MCF 10A (cell line): ENCODE measurements at regions of chr5 and their contacts with region 1.

Region 1: DNA sequence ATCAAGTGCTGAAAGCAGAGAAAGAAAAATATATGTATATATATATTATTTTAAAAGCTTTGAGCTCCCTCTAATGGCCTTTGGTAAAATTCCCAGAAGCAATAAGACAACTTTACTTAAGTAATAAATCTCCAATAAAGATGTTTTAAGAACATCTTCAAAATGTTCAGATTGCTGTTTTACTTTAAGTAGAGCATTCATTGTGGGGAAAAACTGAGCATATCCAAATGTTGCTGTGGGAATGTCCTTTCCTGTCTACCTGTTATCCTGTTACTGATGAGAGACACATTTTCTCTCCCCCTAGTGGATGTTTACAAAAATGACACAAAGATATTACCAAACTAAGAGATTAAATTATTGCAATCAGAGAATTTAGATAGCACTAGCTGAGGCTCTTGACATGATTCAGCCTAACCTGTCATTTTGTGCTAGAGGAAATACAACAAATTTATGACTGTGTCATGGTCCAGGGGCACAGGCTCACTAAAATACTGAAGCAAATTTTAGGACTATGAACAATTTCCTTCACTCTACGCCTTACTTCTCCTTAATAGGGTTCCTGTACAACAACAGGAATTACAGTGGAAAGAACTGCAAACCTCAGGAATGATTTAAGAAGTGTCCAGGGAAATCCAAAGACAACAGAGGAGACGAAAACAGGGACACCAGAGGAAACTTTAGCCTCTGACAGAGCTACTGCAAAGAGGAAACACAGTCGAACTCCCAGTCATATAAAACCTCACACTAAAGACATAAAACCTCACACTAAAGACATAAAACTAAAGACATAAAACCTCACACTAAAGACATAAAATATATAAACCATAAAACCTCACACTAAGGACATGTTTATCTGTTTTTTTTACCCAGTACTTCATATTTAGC is 24.3 kb upstream of the PRRC1 start:
- DNase-seq: peak; percentile 75
- H3K4me3 Mint-ChIP-seq: no peak overlapping the region
- H3K27ac Mint-ChIP-seq: no peak overlapping the region
- H3K4me1 Mint-ChIP-seq: no peaks in the 10 kb centered on the region
- H3K27me3 Mint-ChIP-seq: peaks cover 82% of the 10 kb centered on the region
- CTCF ChIP-seq: peak; percentile 95

Region 2: DNA sequence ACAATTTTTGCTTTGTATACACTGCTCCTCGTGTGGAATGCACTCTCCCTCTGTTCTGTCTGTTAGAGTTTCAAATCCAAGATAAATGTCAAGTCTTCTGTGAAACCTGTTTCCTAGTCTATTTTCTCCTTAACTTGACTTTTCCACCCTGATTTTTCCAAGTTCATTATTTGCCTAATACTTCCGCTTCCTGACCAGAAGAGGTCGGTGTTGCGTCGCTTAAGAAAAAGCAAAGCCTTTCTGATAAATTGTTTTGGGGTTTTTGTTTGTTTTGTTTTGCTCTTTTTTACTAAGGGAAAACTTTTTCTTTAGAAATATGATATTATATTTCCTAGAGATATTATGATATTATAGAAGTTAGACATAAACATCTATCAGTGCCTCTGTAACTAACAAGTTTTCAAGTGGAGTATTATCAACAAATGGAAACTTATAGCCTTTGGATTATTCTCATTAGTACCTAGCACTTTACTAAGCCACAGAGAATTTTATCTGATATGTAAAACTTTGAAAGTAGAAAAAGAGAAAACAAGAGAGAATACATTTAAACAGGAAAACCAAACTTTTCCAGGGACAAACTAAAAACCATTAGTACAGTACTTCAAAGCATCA is 836.6 kb before region 1 on chr5:
- CTCF ChIA-PET with region 1: interaction called, 11 read pairs
- POLR2A ChIA-PET with region 1: interaction called, 3 read pairs
- intact Hi-C with region 1: loop called (anchors 1 kb)
- DNase-seq: peak; percentile 67
- H3K4me3 Mint-ChIP-seq: no peak overlapping the region
- H3K27ac Mint-ChIP-seq: no peak overlapping the region
- H3K4me1 Mint-ChIP-seq: no peaks in the 10 kb centered on the region
- H3K27me3 Mint-ChIP-seq: no peaks in the 10 kb centered on the region
- CTCF ChIP-seq: peak; percentile 98

Region 3: GRCh38 chr5:126837906-126838539 is 655.1 kb before region 1 on chr5:
- CTCF ChIA-PET with region 1: interaction called, 50 read pairs
- POLR2A ChIA-PET with region 1: no interaction called
- intact Hi-C with region 1: loop called (anchors 2 kb)
- DNase-seq: peak; percentile 13
- H3K4me3 Mint-ChIP-seq: no peak overlapping the region
- H3K27ac Mint-ChIP-seq: peak overlapping the region; percentile 8
- H3K4me1 Mint-ChIP-seq: no peaks in the 10 kb centered on the region
- H3K27me3 Mint-ChIP-seq: no peaks in the 10 kb centered on the region
- CTCF ChIP-seq: peak; percentile 48

Region 4: DNA sequence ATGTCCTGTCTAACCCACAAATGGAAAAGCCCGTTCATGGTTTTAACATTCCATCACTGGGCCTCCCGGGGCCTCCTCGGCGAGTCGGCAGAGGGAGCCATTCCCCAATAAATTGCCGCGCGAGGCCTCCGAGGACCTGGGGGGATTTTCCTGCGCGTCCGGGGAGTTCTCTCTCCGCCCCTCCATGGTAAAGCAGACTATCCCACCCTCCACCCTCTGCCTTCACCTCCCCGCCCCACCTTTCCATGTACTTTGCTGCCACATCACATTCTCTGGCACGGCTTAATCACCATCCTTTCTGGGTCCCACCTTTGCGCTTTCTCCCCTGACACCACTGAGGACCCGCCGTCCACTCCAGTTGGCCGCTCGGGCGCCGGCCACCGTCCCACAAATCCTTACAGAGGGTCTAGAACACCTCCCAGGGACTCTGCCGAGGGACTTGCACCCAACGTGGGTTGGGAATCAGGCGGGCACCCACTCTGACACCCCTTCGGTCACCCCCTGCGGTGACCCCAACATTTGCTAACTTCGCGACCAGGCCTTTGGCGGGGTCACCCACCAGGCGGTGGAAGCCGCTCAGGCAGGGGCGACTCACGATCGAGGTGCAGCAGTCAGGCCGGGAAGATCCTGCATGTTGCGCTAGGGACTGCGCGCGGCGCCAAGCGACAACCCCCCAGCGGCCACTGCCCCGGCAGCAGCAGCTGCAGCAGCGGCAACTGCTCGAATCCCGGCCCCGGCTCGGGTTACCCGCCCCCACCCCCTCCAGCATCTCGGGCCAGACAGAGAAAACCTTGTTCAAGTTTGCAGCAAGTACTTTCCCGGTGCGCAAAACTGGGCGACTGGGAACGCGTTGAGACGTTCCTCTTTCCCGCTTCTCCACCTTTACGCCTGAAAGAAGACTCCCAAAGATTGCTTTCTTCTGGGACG is 202.8 kb before region 1 on chr5 and contains the start of gene MEGF10:
- CTCF ChIA-PET with region 1: interaction called, 10 read pairs
- POLR2A ChIA-PET with region 1: no interaction called
- intact Hi-C with region 1: loop called (anchors 1 kb)
- DNase-seq: peak; percentile 44
- H3K4me3 Mint-ChIP-seq: peak within 1 kb of the TSS; percentile 43
- H3K27ac Mint-ChIP-seq: no peak within 1 kb of the TSS
- H3K4me1 Mint-ChIP-seq: no peaks in the 10 kb centered on the region
- H3K27me3 Mint-ChIP-seq: no peaks in the 10 kb centered on the region
- CTCF ChIP-seq: peak; percentile 74
- total RNA-seq, gene MEGF10: not detected in 2 replicates

Region 5: GRCh38 chr5:127296321-127296720 is 196.8 kb before region 1 on chr5:
- CTCF ChIA-PET with region 1: interaction called, 10 read pairs
- POLR2A ChIA-PET with region 1: no interaction called
- intact Hi-C with region 1: no loop called
- DNase-seq: peak; percentile 79
- H3K4me3 Mint-ChIP-seq: no peak overlapping the region
- H3K27ac Mint-ChIP-seq: peak overlapping the region; percentile 25
- H3K4me1 Mint-ChIP-seq: peaks cover 13% of the 10 kb centered on the region
- H3K27me3 Mint-ChIP-seq: no peaks in the 10 kb centered on the region
- CTCF ChIP-seq: no peak

Region 6: GRCh38 chr5:127505905-127506304 is 12.8 kb after region 1 on chr5:
- CTCF ChIA-PET with region 1: interaction called, 27 read pairs
- POLR2A ChIA-PET with region 1: interaction called, 4 read pairs
- intact Hi-C with region 1: no loop called
- DNase-seq: no peak
- H3K4me3 Mint-ChIP-seq: no peak overlapping the region
- H3K27ac Mint-ChIP-seq: no peak overlapping the region
- H3K4me1 Mint-ChIP-seq: no peaks in the 10 kb centered on the region
- H3K27me3 Mint-ChIP-seq: peaks cover 40% of the 10 kb centered on the region
- CTCF ChIP-seq: no peak